Activated T-helper 1 cell treated with anti-CD3 and anti-CD28 coated beads, Interleukin-12 subunit alpha, Interleukin-12 subunit beta, Interleukin-2, Interleukin-4 antibody, amounts not matched to agents 30 ng/mL and 10 ng/mL and 1 ng/mL, durations not matched to agents 14 hours and 24 hours and 36 hours (primary cell): ENCODE measurements at regions of chr2 and their contacts with region 1.

Region 1: DNA sequence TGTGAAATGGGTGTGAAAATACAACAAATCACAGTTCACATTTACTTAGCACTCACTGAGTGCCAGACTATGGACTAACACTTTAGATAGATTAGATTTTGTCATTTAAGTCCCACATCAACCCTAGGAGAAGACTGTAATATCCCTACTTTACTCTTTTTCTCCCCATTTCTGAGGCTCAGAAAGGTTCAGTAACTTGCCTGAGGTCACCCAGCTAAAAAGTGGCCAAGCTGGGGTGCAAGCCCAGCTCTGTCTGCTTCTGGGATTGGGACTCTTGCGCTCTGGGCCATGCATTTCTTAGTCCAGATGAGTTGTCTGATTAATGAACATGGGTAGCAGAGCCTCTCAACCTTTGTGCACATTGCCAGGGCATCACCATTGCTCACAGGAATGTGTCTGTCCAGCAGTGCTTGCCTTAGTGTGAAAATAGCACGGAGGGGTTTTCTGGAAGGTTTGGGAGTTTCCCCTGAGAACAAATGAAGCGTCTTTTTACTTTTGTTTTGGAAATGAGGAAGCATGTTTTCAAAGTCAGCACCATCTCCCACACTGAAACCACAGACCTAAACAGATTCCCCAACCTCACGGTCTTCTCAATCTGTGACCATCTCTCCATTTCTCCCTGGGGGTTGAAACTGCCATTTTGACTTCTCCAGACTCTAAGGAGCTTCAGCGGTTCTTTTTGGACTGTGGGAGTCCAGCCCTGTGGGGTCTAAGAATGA is 31.9 kb downstream of the NRP2 start:
- DNase-seq: no peak
- H3K4me3 Mint-ChIP-seq: peak overlapping the region; percentile 5
- H3K27ac Mint-ChIP-seq: peak overlapping the region; percentile 25
- H3K4me1 Mint-ChIP-seq: peaks cover 78% of the 10 kb centered on the region
- H3K27me3 Mint-ChIP-seq: no peaks in the 10 kb centered on the region

Region 2: DNA sequence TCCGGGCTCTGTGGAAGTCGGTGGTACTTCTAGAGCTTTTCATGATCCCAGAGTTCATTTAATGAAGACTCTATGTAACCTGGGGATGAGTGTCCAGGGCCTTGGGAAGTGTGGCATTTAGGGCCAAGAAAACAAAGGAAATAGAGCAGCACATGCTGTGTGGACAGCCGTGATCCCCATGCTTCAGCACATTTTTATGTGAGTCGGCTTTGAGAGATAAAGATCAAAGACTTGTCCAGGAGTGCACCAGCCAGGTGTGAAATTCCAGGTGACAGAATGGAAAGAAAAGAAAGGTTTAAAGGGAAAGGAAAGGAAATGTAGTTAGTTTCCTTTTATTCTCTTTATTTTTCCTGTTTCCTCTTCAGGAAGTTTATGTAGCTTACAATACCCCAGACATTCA is 289.9 kb before region 1 on chr2:
- intact Hi-C with region 1: no loop called
- DNase-seq: no peak
- H3K4me3 Mint-ChIP-seq: no peak overlapping the region
- H3K27ac Mint-ChIP-seq: no peak overlapping the region
- H3K4me1 Mint-ChIP-seq: no peaks in the 10 kb centered on the region
- H3K27me3 Mint-ChIP-seq: no peaks in the 10 kb centered on the region

Region 3: DNA sequence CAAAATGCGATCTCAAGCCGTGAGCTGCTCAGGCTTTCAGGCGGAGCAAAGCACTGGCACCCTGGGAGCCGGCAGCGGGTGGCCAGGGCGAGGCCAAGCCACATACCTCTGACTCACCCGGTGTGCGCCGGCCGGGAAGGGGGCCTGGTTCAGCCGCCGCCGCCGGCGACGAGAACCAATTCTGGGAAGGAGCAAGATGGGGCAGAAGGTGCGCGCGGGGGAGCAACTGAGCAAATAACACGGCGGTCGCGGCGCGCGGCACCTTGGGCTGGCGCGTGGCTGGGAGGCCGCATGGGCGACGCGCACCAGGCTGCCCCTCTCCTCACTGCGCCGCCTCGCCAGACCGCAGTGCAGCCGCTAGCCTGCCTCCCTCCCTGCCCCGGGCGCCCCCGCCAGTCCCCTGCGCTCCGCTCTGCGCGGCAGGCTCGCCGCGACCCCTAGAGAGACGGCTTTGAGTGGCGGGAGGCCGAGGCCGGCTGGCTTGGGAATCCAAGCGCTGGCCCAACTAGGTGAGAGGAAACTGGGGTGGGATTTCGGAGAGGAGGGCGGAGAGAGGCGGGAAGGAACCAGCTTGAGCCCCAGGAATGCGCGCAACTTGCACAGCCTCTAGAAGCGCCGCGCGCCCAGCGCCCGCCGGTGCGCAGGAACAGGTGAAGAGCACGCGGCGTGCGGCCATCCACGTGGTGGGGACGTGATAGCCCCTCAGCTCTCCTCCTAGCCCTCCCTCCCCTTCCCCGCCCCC is 28.7 kb before region 1 on chr2:
- intact Hi-C with region 1: loop called (anchors 1 kb)
- DNase-seq: no peak
- H3K4me3 Mint-ChIP-seq: peak overlapping the region; percentile 89
- H3K27ac Mint-ChIP-seq: peak overlapping the region; percentile 89
- H3K4me1 Mint-ChIP-seq: peaks cover 38% of the 10 kb centered on the region
- H3K27me3 Mint-ChIP-seq: peaks cover 59% of the 10 kb centered on the region

Region 4: DNA sequence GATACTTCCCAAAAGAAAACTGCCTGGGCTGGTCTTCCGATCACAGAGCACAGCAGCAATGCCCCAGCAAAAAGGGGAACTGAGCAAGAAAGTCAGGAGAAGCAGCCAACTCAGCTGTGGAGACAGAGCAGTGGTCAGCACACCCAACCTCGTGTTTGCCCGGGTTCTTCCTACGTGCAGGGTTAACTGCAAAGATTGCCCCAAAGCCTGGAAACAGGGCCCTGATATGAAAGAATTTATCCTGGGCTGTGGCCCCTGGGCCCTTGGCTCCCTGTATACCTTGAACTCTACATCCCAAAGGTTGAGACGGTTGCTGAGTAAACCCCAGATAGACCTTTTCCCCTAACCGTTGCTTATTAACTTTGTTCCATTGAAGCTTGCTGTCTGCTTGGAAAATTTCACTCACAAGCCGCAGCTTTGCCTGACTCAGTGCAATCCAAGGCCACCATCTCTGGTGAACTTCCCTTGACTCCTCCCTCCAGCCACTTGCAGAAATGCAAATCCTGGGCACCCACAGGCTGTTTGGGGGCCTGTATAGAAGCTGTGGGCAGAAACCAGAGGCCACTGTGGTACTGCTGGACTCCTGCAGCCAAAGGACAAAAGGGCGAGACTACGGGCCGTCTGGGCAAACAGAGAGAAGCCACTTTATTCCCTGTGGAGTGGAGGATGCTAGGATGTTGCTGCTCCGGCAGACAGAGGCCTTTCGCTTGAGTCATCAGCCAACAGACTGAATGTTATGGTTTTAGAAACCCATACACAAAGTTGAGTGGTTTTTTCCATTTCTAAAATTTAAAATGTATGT is 13.7 kb before region 1 on chr2:
- intact Hi-C with region 1: loop called (anchors 1 kb)
- DNase-seq: no peak
- H3K4me3 Mint-ChIP-seq: peak overlapping the region; percentile 35
- H3K27ac Mint-ChIP-seq: peak overlapping the region; percentile 92
- H3K4me1 Mint-ChIP-seq: peaks cover 37% of the 10 kb centered on the region
- H3K27me3 Mint-ChIP-seq: no peaks in the 10 kb centered on the region

Region 5: DNA sequence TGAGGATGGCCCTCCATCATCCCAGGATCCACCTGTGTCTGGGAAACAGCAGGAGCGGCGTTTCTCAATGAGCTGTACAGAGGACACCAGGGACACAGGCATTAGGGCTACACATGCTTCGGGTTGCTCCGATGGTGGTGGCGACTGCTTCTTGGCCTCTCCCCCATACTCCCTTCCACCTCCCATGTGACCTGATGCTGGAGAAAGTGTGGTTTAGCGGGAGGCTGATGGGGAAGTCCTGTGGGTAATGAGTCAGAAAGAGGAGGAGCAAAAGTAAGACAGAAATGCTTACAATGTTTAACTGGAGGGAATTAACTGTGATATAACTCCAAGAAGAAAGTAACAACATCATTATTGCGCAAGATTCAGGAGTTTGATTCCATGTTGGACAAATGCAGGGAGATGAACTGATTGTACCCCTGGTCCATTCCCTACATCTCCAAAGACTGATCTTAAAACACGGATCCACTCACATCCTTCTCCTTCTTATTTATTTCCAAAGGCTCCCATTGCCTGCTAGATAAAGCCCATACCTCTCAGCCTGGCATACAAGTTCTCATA is 154.6 kb after region 1 on chr2:
- intact Hi-C with region 1: loop called (anchors 5 kb)
- DNase-seq: peak; percentile 32
- H3K4me3 Mint-ChIP-seq: peak overlapping the region; percentile 22
- H3K27ac Mint-ChIP-seq: peak overlapping the region; percentile 64
- H3K4me1 Mint-ChIP-seq: peaks cover 16% of the 10 kb centered on the region
- H3K27me3 Mint-ChIP-seq: peaks cover 7% of the 10 kb centered on the region